Gastrocnemius medialis (tissue), 4 donors: ENCODE measurements at regions of chr19 and their contacts with region 1.

Region 1: DNA sequence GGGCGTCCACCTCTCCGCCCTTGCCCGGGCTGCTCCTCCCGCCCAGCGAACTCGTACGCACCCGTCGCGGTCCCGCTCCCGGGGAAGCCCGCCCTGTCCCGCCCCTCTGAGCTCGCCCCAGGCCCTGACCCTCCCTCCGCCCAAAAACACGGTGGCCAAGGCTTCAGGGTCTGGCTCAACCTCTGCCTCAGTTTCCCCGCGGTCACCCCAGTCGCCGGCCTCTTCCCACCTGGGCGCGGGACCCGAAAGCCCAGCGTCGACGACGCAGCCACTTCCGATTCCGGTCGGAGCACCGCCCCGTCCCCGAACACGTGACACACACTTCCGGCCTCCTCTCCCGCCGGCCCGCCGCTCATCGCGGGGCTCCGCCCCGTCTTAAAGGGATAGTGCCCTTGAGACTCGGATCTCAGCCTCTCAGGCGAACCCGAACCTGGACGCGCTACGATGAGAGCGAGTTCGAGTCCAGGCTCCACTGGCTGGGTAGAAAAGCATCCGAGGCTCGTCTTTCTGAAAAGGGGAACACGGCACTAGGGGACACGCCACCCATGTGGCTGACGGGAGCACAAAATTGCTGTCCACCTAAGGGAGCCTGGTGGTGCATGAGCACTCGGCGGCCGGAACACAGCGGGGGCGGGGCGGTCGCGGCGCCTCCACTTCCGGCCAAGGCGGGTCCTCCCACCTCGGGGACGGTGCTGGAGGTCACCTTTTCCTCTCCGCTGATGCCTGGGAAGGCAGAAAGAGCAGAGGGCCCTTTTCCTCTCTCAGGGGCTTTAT is at the start of gene C19orf25:
- DNase-seq: peak; percentile 86 to 91
- ATAC-seq: peak; percentile 98
- H3K4me3 ChIP-seq: peak within 1 kb of the TSS; percentile 84 to 99 (median 92)
- H3K27ac ChIP-seq: peak within 1 kb of the TSS; percentile 71 to 77 (median 72)
- H3K4me1 ChIP-seq: peaks cover 9 to 19% of the 10 kb centered on the region in 2 donors
- H3K27me3 ChIP-seq: no peaks in the 10 kb centered on the region
- CTCF ChIP-seq: no peak
- POLR2A ChIP-seq: peak; percentile 39 to 66
- total RNA-seq, gene C19orf25: 18.7 to 25.7 (median 19.9) TPM

Region 2: GRCh38 chr19:1383311-1384084 is 95.6 kb before region 1 on chr19 and contains the start of gene NDUFS7:
- in situ Hi-C with region 1: no loop called
- intact Hi-C with region 1: no loop called
- DNase-seq: peak; percentile 80 to 86
- ATAC-seq: peak; percentile 88 to 92
- H3K4me3 ChIP-seq: peak within 1 kb of the TSS; percentile 83 to 91 (median 85)
- H3K27ac ChIP-seq: peak within 1 kb of the TSS; percentile 93 to 96 (median 94)
- H3K4me1 ChIP-seq: peaks cover 45 to 50% of the 10 kb centered on the region in 2 donors
- H3K27me3 ChIP-seq: no peaks in the 10 kb centered on the region
- CTCF ChIP-seq: peak; percentile 36 to 66 (median 43)
- POLR2A ChIP-seq: peak; percentile 85 to 89
- total RNA-seq, gene NDUFS7: 259 to 497 (median 377) TPM

Region 3: GRCh38 chr19:1438035-1438932 is 40.8 kb before region 1 on chr19 and contains the start of gene RPS15:
- in situ Hi-C with region 1: no loop called
- intact Hi-C with region 1: loop called (anchors 1 kb)
- DNase-seq: peak; percentile 88 to 92
- ATAC-seq: peak; percentile 90 to 94
- H3K4me3 ChIP-seq: peak within 1 kb of the TSS; percentile 81 to 98 (median 88)
- H3K27ac ChIP-seq: peak within 1 kb of the TSS; percentile 86 to 92 (median 88)
- H3K4me1 ChIP-seq: peaks cover 14 to 29% of the 10 kb centered on the region in 2 donors
- H3K27me3 ChIP-seq: no peaks in the 10 kb centered on the region
- CTCF ChIP-seq: peak; percentile 89 to 97 (median 95)
- POLR2A ChIP-seq: peak; percentile 92 to 96
- total RNA-seq, gene RPS15: 2,323 to 3,835 (median 2,607) TPM

Region 4: GRCh38 chr19:1465191-1466016 is 13.7 kb before region 1 on chr19:
- in situ Hi-C with region 1: no loop called
- intact Hi-C with region 1: no loop called
- DNase-seq: no peak
- ATAC-seq: no peak
- H3K4me3 ChIP-seq: no peak overlapping the region
- H3K27ac ChIP-seq: no peak overlapping the region
- H3K4me1 ChIP-seq: peaks cover 6 to 22% of the 10 kb centered on the region in 2 donors
- H3K27me3 ChIP-seq: peaks cover 46 to 53% (median 46%) of the 10 kb centered on the region in 3 donors
- CTCF ChIP-seq: peak in 2 of 5 experiments; percentile 24 to 42
- POLR2A ChIP-seq: no peak

Region 5: DNA sequence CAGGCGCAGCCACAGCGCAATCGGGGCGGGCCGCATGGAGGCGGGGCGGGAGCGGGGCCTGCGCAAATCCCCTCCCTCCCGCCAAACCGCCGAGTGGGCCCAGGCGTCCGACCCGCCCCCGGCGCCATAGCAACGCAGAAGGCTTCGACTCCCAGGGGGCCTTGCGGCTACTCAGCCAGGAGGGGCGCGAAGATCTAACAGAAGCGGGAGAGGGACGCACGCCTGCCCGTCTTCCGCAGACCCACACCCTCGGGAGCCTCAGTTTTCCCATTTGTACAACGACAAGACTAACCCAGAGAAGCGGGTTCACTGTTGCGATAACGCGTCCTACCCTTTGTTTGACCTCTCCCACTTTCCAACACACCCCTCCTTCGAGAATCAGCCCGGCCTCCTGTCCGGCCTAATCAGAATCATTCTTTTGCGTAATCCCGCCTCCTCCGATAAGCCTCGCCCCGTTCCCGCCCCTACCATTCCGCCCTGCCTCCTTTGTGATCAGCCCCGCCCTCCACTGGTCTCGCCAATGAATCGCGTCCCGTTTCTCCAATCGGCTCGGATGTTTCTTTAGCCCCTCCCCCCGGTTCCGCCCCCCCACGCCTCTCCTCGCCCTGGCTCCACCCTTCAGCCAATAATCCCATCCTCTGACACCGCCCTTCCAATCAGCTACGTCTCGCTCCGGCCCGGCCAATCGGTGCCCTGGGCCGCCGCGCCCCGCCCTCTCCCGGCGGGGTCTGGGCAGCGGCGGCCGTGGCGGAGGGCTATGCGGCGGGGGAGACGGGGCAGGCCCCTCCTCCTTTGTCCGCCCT is 11.4 kb after region 1 on chr19 and contains the start of gene PCSK4:
- in situ Hi-C with region 1: no loop called
- intact Hi-C with region 1: loop called (anchors 1 kb)
- DNase-seq: peak; percentile 98 to 99
- ATAC-seq: peak; percentile 94 to 98
- H3K4me3 ChIP-seq: peak within 1 kb of the TSS; percentile 54 to 73 (median 62)
- H3K27ac ChIP-seq: peak within 1 kb of the TSS; percentile 70 to 86 (median 76)
- H3K4me1 ChIP-seq: peaks cover 5 to 9% of the 10 kb centered on the region in 2 donors
- H3K27me3 ChIP-seq: no peaks in the 10 kb centered on the region
- CTCF ChIP-seq: peak in 1 of 5 experiments; percentile 5
- POLR2A ChIP-seq: no peak
- total RNA-seq, gene PCSK4: 0.12 to 0.60 (median 0.37) TPM

Region 6: DNA sequence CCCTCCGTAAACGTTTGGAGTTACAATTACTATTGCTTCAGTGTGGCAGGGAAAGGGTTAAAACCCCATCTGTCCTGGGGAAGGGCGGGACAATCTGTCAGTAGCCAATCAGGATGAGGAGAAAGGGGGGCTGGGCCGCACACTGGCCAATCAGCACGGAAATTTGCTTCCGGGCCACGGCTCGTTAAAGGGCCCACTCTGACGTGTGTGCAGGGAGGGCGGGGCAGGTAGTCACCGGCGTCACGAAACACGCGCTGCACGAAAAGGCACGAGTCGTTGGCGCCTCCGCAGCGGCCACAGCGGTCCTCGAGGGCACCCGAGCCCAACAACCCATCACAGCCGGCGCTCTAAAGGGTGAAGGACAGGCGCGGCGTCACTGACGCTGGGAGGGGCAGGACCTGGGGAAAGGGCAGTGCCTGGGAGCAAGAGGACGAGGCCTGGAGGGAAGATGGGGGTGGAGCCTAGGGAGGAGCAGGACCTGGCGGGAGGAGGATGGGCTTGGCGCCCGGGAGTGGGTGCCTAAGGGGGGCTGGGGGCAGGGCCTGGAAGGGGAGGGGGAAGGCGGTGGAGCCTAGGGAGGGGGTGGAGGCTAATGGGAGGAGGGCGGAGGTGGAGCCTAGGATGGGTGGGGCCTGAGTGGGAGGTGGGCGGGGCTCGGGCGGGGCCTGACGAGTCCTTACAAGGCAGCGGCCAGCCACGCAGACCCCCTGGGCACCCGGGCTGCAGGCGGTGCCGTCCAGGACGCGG is 28.8 kb after region 1 on chr19:
- in situ Hi-C with region 1: no loop called
- intact Hi-C with region 1: loop called (anchors 1 kb)
- DNase-seq: peak; percentile 91 to 95
- ATAC-seq: peak; percentile 95 to 96
- H3K4me3 ChIP-seq: peak overlapping the region; percentile 42 to 68 (median 59)
- H3K27ac ChIP-seq: peak overlapping the region; percentile 82 to 99 (median 92)
- H3K4me1 ChIP-seq: peaks cover 4 to 27% of the 10 kb centered on the region in 2 donors
- H3K27me3 ChIP-seq: peaks cover 0 to 4% (median 2%) of the 10 kb centered on the region in 3 donors
- CTCF ChIP-seq: peak in 1 of 5 experiments; percentile 23
- POLR2A ChIP-seq: peak; percentile 45 to 47

Region 7: DNA sequence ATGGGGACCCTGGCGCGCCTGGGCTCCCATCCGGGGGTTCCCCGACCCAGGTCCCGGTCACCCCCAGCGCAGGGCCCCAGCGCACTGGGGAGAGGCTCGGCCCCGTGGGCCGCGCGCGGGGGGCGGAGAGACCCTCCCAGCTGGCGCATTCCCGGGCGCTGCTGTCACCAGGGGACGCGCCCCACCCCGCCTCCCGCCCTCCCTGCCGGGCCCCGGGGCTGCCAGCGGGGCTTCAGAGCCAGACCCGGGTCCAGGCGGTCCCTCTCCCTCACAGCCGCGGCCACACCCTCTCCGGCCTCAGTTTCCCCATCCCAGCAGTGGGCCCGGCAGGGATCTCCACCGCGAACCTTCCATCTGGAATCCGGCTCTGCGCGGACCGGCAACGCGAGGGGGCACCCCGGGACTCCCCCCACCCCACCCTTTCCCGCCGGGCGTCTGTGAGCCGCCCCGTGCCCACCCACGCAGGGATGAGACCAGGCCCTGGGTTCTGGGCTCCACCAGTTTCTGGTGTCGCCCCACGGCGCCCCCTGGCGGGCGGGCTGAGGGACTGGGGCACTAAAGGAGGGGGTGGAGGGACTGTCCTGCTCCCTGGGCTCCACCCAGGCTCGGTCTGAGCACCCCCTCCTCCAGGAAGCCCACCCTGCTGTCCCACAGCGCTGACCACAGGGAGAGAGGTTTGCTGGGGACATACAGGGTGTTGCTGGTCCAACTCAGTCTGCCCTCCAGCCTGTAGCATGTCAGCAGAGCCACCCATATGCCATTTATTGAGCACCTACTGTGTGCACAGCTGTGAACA is 34.6 kb after region 1 on chr19:
- in situ Hi-C with region 1: no loop called
- intact Hi-C with region 1: loop called (anchors 1 kb)
- DNase-seq: peak in 1 of 2 donors; percentile 54
- ATAC-seq: peak; percentile 73 to 75
- H3K4me3 ChIP-seq: peak overlapping the region; percentile 64 to 69 (median 64)
- H3K27ac ChIP-seq: peak overlapping the region; percentile 83 to 91 (median 89)
- H3K4me1 ChIP-seq: peaks cover 3 to 29% of the 10 kb centered on the region in 2 donors
- H3K27me3 ChIP-seq: no peaks in the 10 kb centered on the region
- CTCF ChIP-seq: peak; percentile 41 to 90 (median 83)
- POLR2A ChIP-seq: no peak

Region 8: DNA sequence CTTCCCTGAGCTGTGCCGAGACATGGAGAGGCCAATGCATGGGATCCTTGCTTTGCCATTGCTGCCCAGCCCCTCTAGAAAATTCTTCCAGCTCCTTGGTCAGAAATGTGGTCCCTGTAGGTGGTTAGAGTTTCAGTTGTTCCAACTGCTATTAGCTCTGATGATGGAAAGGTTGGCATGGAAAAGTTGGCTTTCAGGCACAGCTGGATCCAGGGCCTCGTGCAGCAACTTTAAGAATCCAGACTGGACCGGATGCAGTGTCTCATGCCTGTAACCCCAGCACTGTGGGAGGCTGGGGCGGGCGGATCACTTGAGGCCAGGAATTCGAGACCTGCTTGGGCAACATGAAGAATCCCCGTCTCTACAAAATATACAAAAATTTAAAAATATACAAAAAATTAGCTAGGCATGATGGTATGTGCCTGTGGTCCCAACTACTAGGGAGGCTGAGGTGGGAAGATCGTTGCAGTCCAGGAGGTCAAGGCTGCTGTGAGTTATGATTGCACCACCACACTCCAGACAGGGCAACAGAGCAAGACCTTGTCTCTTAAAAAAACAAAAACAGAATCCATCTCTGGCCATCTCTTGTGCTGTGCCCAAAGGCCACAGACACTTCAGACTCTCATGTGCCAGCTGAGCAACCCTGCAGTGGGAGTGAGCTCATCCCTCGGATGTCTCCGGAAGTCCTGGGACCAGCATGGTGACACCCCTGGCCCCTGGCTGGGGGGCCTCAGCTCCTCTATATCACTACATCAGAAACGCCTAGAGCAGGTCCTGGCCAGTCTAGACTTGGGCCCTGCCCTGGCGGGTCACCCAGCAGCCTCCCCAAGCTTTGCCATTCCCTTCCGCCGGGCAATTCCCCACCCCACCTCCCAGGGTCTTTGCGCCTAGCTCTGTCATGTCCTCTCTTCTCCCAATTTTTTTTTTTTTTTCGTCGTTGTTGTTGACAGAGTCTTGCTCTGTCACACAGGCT is 72.2 kb after region 1 on chr19:
- in situ Hi-C with region 1: no loop called
- intact Hi-C with region 1: no loop called
- DNase-seq: no peak
- ATAC-seq: no peak
- H3K4me3 ChIP-seq: no peak overlapping the region
- H3K27ac ChIP-seq: no peak overlapping the region
- H3K4me1 ChIP-seq: no peaks in the 10 kb centered on the region
- H3K27me3 ChIP-seq: no peaks in the 10 kb centered on the region
- CTCF ChIP-seq: no peak
- POLR2A ChIP-seq: no peak